Right ventricle myocardium superior (tissue), 1 donor: ENCODE measurements at regions of chr7 and their contacts with region 1.

Region 1: GRCh38 chr7:104848138-104848990 is 165.6 kb upstream of the KMT2E start:
- DNase-seq: no peak
- ATAC-seq: no peak

Region 2: GRCh38 chr7:104231054-104232046 is 617.0 kb before region 1 on chr7:
- intact Hi-C with region 1: loop called (anchors 10 kb)
- DNase-seq: peak; percentile 40
- ATAC-seq: peak; percentile 79

Region 3: GRCh38 chr7:104267701-104268368 is 580.5 kb before region 1 on chr7:
- intact Hi-C with region 1: loop called (anchors 10 kb)
- DNase-seq: no peak
- ATAC-seq: no peak